Naive thymus-derived CD4-positive, alpha-beta T cell (primary cell): ENCODE measurements at regions of chr20 and their contacts with region 1.

Region 1: GRCh38 chr20:34538671-34539123 is 19.8 kb upstream of the MAP1LC3A start:
- DNase-seq: peak in 6 of 9 donors; percentile 23 to 62 (median 34)
- ATAC-seq: peak; percentile 74
- H3K4me3 ChIP-seq: no peak overlapping the region
- H3K4me3 Mint-ChIP-seq: no peak overlapping the region
- H3K27ac ChIP-seq: no peak overlapping the region
- H3K27ac Mint-ChIP-seq: peak overlapping the region in 2 of 9 donors; percentile 33 to 59
- H3K4me1 ChIP-seq: peaks cover 0 to 21% of the 10 kb centered on the region in 2 donors
- H3K4me1 Mint-ChIP-seq: peaks cover 0 to 24% (median 11%) of the 10 kb centered on the region in 7 donors
- H3K27me3 ChIP-seq: no peaks in the 10 kb centered on the region
- H3K27me3 Mint-ChIP-seq: no peaks in the 10 kb centered on the region

Region 2: GRCh38 chr20:34709831-34710567 is 171.3 kb after region 1 on chr20:
- CTCF ChIA-PET with region 1: interaction called, 32 read pairs
- POLR2A ChIA-PET with region 1: interaction called, 4 read pairs
- intact Hi-C with region 1: loop called (anchors 1 kb)
- DNase-seq: peak in 1 of 9 donors; percentile 65
- ATAC-seq: peak; percentile 58
- H3K4me3 ChIP-seq: peak overlapping the region; percentile 75
- H3K4me3 Mint-ChIP-seq: peak overlapping the region; percentile 80 to 95 (median 89)
- H3K27ac ChIP-seq: peak overlapping the region; percentile 87
- H3K27ac Mint-ChIP-seq: peak overlapping the region; percentile 16 to 96 (median 87)
- H3K4me1 ChIP-seq: peaks cover 3 to 7% of the 10 kb centered on the region in 2 donors
- H3K4me1 Mint-ChIP-seq: peaks cover 11 to 38% (median 16%) of the 10 kb centered on the region in 7 donors
- H3K27me3 ChIP-seq: no peaks in the 10 kb centered on the region
- H3K27me3 Mint-ChIP-seq: peaks cover 0 to 9% (median 0%) of the 10 kb centered on the region in 5 donors

Region 3: GRCh38 chr20:34768096-34768495 is 229.4 kb after region 1 on chr20:
- CTCF ChIA-PET with region 1: interaction called, 6 read pairs
- POLR2A ChIA-PET with region 1: no interaction called
- intact Hi-C with region 1: loop called (anchors 1 to 5 kb)
- DNase-seq: no peak
- ATAC-seq: no peak
- H3K4me3 ChIP-seq: no peak overlapping the region
- H3K4me3 Mint-ChIP-seq: no peak overlapping the region
- H3K27ac ChIP-seq: no peak overlapping the region
- H3K27ac Mint-ChIP-seq: no peak overlapping the region
- H3K4me1 ChIP-seq: no peaks in the 10 kb centered on the region
- H3K4me1 Mint-ChIP-seq: peaks cover 0 to 3% (median 0%) of the 10 kb centered on the region in 7 donors
- H3K27me3 ChIP-seq: no peaks in the 10 kb centered on the region
- H3K27me3 Mint-ChIP-seq: no peaks in the 10 kb centered on the region